ENCODE measurements at regions of chr3 and their contacts with region 1.

Region 1: GRCh38 chr3:153001210-153002078 is 160.6 kb upstream of the RAP2B start:
- DNase-seq: no peak
- ATAC-seq: no peak
- H3K4me3 Mint-ChIP-seq: no peak overlapping the region
- H3K27ac Mint-ChIP-seq: no peak overlapping the region
- H3K4me1 Mint-ChIP-seq: no peaks in the 10 kb centered on the region
- H3K27me3 Mint-ChIP-seq: no peaks in the 10 kb centered on the region
- CTCF ChIP-seq: no peak

Region 2: DNA sequence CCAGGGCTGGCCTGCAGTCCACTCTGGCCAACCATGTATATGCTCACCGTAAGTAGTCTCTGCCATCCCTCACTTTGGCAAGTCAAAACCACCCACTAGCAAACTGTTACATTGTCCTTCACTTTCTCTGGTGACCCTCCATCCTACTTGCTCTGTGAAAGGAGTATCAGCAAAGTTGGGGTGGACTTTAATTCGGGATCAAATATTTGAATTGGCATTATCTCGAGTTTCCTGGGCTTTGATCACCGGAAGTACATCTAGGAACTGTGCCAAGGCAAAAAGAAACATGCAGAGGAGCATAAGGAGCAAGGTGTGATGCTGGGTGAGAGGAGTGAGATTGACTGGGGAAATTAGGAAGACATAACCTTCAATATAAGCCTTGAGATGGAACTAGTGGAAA is 355.4 kb before region 1 on chr3:
- CTCF ChIA-PET with region 1: no interaction called
- POLR2A ChIA-PET with region 1: no interaction called
- intact Hi-C with region 1: loop called (anchors 5 kb)
- DNase-seq: no peak
- ATAC-seq: no peak
- H3K4me3 Mint-ChIP-seq: no peak overlapping the region
- H3K27ac Mint-ChIP-seq: no peak overlapping the region
- H3K4me1 Mint-ChIP-seq: no peaks in the 10 kb centered on the region
- H3K27me3 Mint-ChIP-seq: peaks cover 3% of the 10 kb centered on the region
- CTCF ChIP-seq: no peak

Region 3: DNA sequence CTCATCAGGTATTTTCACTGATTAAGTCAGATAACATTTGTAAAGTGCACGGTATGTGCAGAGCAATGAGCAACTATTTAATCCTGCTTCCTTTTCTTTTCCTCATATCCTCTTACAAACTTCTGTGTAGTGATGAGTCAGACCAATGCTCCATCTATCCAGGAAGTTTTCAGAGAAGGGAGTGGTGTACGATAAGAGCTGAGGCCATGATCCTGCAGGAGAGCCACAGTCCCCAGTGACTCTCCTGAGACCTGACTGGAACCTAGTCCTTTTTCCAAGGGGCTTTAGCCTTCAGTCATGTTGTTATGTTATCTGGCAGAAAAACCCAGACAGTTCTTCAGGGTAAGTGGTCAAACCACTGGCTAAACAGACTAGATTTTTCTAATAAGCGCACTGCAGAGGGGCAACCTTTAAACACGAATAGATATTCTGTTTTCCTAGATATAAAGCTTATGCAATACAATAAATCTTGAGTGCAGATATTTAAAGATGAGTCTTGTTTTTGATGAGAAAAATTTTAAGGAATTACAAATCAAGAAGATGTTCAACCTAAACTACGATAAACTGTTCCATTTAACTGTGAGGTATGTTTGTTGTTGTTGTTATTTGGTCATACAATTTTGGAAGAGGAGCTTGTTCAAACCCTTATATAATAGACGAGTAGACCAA is 50.1 kb after region 1 on chr3:
- CTCF ChIA-PET with region 1: no interaction called
- POLR2A ChIA-PET with region 1: no interaction called
- intact Hi-C with region 1: no loop called
- DNase-seq: no peak
- ATAC-seq: no peak
- H3K4me3 Mint-ChIP-seq: no peak overlapping the region
- H3K27ac Mint-ChIP-seq: no peak overlapping the region
- H3K4me1 Mint-ChIP-seq: no peaks in the 10 kb centered on the region
- H3K27me3 Mint-ChIP-seq: peaks cover 1% of the 10 kb centered on the region
- CTCF ChIP-seq: no peak